Activated CD4-positive, alpha-beta T cell treated with anti-CD3 and anti-CD28 coated beads for 36 hours (primary cell): ENCODE measurements at regions of chr17 and their contacts with region 1.

Region 1: GRCh38 chr17:56918916-56919639 is 5.2 kb upstream of the TRIM25 start:
- DNase-seq: no peak
- ATAC-seq: no peak
- H3K4me3 Mint-ChIP-seq: no peak overlapping the region
- H3K27ac Mint-ChIP-seq: peak overlapping the region; percentile 53
- H3K4me1 Mint-ChIP-seq: peaks cover 47% of the 10 kb centered on the region
- H3K27me3 Mint-ChIP-seq: no peaks in the 10 kb centered on the region

Region 2: DNA sequence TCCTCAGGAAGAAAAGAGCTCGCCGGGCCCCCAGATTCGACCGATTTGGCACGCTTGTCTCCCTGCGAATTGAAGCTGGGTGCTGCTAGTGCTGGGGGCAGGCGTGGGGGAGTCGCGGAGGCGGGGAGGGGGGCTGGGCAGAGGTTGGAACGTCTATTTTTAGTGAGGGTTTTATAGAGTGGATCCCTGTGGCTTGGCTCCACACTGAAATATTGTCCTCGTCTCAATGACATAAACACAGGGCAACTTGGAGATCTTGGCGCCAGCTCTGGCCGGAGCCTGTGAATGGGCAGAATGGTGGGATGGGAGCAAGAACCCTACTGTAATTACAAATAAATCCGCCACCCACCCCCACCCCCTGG is 341.3 kb before region 1 on chr17:
- CTCF ChIA-PET with region 1: no interaction called
- POLR2A ChIA-PET with region 1: no interaction called
- intact Hi-C with region 1: no loop called
- DNase-seq: no peak
- ATAC-seq: no peak
- H3K4me3 Mint-ChIP-seq: no peak overlapping the region
- H3K27ac Mint-ChIP-seq: no peak overlapping the region
- H3K4me1 Mint-ChIP-seq: no peaks in the 10 kb centered on the region
- H3K27me3 Mint-ChIP-seq: peaks cover 10% of the 10 kb centered on the region

Region 3: DNA sequence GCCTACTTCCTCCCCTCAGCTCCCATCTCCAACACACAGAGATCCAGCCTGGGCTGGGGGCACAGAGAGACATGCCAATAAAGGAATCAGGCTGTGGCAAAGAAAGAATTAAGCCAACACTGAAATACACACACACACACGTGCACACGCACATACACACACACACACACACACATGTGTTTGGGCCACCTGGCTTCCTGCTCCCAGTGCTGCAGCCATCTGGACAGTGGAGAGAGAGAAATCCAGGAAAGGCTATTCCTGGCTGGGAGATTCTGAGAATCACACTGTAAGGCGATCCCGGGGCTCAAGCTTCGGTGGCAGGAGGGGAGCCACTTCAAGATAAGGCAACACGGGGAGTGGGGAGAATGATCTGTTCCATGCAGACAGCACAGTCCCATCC is 253.2 kb before region 1 on chr17:
- CTCF ChIA-PET with region 1: no interaction called
- POLR2A ChIA-PET with region 1: no interaction called
- intact Hi-C with region 1: no loop called
- DNase-seq: no peak
- ATAC-seq: no peak
- H3K4me3 Mint-ChIP-seq: no peak overlapping the region
- H3K27ac Mint-ChIP-seq: no peak overlapping the region
- H3K4me1 Mint-ChIP-seq: no peaks in the 10 kb centered on the region
- H3K27me3 Mint-ChIP-seq: peaks cover 3% of the 10 kb centered on the region

Region 4: GRCh38 chr17:56786989-56787482 is 132.0 kb before region 1 on chr17:
- CTCF ChIA-PET with region 1: no interaction called
- POLR2A ChIA-PET with region 1: interaction called, 3 read pairs
- intact Hi-C with region 1: loop called in 1 of 2 experiments (anchors 1 kb)
- DNase-seq: peak; percentile 82
- ATAC-seq: peak; percentile 98
- H3K4me3 Mint-ChIP-seq: peak overlapping the region; percentile 37
- H3K27ac Mint-ChIP-seq: peak overlapping the region; percentile 97
- H3K4me1 Mint-ChIP-seq: peaks cover 34% of the 10 kb centered on the region
- H3K27me3 Mint-ChIP-seq: peaks cover 1% of the 10 kb centered on the region

Region 5: DNA sequence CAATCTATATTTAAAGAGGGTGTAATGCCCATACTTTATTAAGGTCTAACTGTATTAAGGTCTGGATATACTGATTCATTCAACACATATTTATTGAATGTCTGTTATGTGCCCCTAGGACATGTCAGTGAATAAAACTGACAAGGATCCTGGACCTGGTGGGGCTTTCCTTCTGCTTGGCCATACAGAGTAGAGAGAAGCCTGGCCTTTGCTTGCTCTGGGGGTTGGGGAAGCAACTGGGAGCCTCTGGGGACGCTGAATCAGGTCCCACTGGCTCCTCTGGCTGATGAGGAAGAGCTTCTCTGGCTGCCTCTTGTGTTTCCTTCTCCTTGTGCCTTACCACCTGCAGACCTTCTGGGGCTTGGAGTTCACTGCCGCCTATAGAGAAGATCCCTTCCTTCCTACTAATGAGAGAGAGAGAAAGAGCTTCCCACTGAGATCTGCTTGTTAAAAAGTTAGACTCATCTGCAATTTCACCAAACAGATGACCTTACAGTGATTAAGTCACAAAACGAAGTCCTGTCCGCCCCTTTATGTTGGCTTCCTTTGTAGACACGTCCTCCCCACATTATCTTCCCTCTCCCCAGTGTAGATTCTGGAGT is 386.9 kb after region 1 on chr17:
- CTCF ChIA-PET with region 1: no interaction called
- POLR2A ChIA-PET with region 1: no interaction called
- intact Hi-C with region 1: no loop called
- DNase-seq: no peak
- ATAC-seq: no peak
- H3K4me3 Mint-ChIP-seq: no peak overlapping the region
- H3K27ac Mint-ChIP-seq: no peak overlapping the region
- H3K4me1 Mint-ChIP-seq: peaks cover 25% of the 10 kb centered on the region
- H3K27me3 Mint-ChIP-seq: no peaks in the 10 kb centered on the region